CD8-positive, alpha-beta memory T cell (primary cell): ENCODE measurements at regions of chr12 and their contacts with region 1.

Region 1: GRCh38 chr12:132489078-132489601 is 811 bp upstream of the FBRSL1 start:
- DNase-seq: peak; percentile 62 to 80 (median 68)
- H3K4me3 ChIP-seq: peak overlapping the region; percentile 88
- H3K4me3 Mint-ChIP-seq: peak overlapping the region; percentile 83 to 97 (median 91)
- H3K27ac ChIP-seq: peak overlapping the region; percentile 80
- H3K27ac Mint-ChIP-seq: peak overlapping the region; percentile 88 to 99 (median 96)
- H3K4me1 ChIP-seq: peaks cover 50% of the 10 kb centered on the region
- H3K4me1 Mint-ChIP-seq: peaks cover 48 to 66% (median 57%) of the 10 kb centered on the region in 3 donors
- H3K27me3 ChIP-seq: no peaks in the 10 kb centered on the region
- H3K27me3 Mint-ChIP-seq: peaks cover 0 to 1% of the 10 kb centered on the region in 2 donors

Region 2: GRCh38 chr12:132475304-132476037 is 13.7 kb before region 1 on chr12:
- CTCF ChIA-PET with region 1: no interaction called
- POLR2A ChIA-PET with region 1: interaction called, 14 read pairs
- DNase-seq: peak; percentile 18 to 71 (median 38)
- H3K4me3 ChIP-seq: peak overlapping the region; percentile 54
- H3K4me3 Mint-ChIP-seq: peak overlapping the region in 6 of 7 donors; percentile 62 to 82 (median 70)
- H3K27ac ChIP-seq: no peak overlapping the region
- H3K27ac Mint-ChIP-seq: peak overlapping the region in 7 of 8 donors; percentile 42 to 97 (median 88)
- H3K4me1 ChIP-seq: peaks cover 20% of the 10 kb centered on the region
- H3K4me1 Mint-ChIP-seq: peaks cover 9 to 38% (median 20%) of the 10 kb centered on the region in 3 donors
- H3K27me3 ChIP-seq: no peaks in the 10 kb centered on the region
- H3K27me3 Mint-ChIP-seq: peaks cover 3 to 8% of the 10 kb centered on the region in 2 donors